Activated T-helper 2 cell treated with anti-CD3 and anti-CD28 coated beads, Interferon-gamma antibody, Interleukin-2, Interleukin-4, amounts not matched to agents 10 μg/mL and 5 μg/mL and 100 μg/mL, durations not matched to agents 14 hours and 24 hours and 36 hours (primary cell): ENCODE measurements at regions of chr3 and their contacts with region 1.

Region 1: GRCh38 chr3:111539351-111540331 is 2.4 kb upstream of the CD96 start:
- DNase-seq: peak; percentile 36
- H3K4me3 Mint-ChIP-seq: peak overlapping the region; percentile 69
- H3K27ac Mint-ChIP-seq: peak overlapping the region; percentile 85
- H3K4me1 Mint-ChIP-seq: peaks cover 66% of the 10 kb centered on the region
- H3K27me3 Mint-ChIP-seq: no peaks in the 10 kb centered on the region

Region 2: DNA sequence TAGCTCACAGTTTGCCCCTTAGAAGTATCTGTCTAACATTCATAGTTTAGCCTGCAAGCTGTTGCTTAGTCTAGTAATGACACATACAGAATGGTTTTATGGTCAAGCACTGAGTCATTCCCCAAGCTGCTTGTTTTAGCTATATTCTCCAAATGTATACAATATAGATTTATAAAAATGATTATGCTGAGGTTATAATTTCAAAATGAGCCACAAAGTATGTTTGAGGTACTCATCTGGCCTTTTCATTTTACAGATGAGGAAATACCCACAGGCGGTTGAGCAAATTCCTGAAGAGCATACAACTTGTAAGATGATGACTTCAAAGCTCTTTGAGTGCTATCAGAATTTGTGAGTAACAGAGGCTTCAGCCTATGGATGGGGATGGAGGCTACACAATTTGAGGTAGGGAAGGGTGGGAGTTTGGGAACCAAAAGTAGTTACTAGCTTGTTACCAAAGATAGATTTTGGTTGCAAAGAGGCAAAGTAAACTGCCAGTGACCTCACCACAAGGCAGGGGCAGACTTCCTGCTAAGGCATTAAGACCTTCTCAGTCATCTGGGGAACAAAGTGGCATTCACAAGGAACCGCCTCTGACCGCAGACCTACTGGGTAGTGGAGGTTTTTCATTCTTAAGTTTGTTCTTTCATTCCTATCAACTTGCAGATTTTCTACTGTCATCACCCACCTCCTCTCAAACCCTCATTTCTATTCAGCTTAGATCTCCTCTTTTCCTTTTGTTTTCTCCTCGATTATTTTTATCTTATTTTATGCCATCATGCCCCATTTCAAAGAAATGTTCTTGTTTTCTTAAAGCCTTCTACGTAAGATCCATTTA is 725.3 kb before region 1 on chr3:
- intact Hi-C with region 1: loop called (anchors 1 kb)
- DNase-seq: peak; percentile 35
- H3K4me3 Mint-ChIP-seq: peak overlapping the region; percentile 43
- H3K27ac Mint-ChIP-seq: peak overlapping the region; percentile 91
- H3K4me1 Mint-ChIP-seq: peaks cover 29% of the 10 kb centered on the region
- H3K27me3 Mint-ChIP-seq: peaks cover 26% of the 10 kb centered on the region

Region 3: DNA sequence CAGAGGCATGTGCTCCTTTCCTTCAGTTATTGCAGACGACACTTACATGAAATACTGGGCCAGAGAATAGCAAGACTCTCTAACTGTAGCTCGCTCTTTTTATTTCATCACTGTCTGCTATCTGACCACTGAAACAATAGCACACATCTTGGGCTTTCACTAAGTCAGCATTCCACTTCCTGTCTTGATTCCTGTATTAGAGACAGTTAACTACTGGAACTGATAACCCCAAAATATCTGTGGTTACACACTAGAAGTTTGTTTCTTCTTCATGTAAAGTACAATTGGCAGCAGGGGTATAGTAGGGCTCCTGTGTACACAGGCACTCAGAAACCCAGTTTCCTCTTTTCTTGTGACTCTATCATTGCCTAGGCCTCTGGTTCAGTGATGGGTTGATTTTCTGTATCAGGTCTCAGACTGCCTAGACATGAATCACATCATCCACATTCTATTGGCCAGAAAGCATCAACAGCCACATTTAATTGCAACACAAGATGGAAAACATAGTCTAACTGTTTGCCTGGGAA is 227.9 kb before region 1 on chr3:
- intact Hi-C with region 1: loop called (anchors 1 kb)
- DNase-seq: no peak
- H3K4me3 Mint-ChIP-seq: peak overlapping the region; percentile 18
- H3K27ac Mint-ChIP-seq: peak overlapping the region; percentile 77
- H3K4me1 Mint-ChIP-seq: peaks cover 39% of the 10 kb centered on the region
- H3K27me3 Mint-ChIP-seq: no peaks in the 10 kb centered on the region

Region 4: DNA sequence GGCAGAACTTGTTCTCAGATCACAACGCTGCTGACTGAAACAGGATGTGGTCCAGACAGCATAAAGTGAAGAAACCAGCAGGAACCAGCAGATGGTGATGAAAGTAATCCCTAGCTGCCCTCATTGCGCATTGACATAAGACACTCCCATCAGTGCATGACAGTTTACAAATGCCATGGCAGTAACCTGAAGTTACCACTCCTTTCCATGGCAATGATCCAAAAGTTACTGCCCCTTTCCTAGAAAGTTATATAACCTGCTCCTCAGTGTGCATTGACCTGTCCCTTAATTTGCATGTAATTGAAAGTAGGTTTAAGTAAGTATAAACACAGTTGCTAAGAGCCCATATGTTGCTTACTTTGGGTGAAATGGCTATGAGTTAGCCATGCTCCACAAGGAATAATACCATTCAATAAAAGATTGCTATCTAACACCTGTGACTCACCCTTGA is 146.7 kb before region 1 on chr3:
- intact Hi-C with region 1: no loop called
- DNase-seq: no peak
- H3K4me3 Mint-ChIP-seq: no peak overlapping the region
- H3K27ac Mint-ChIP-seq: no peak overlapping the region
- H3K4me1 Mint-ChIP-seq: peaks cover 10% of the 10 kb centered on the region
- H3K27me3 Mint-ChIP-seq: no peaks in the 10 kb centered on the region

Region 5: GRCh38 chr3:111506435-111506834 is 33.2 kb before region 1 on chr3:
- intact Hi-C with region 1: no loop called
- DNase-seq: no peak
- H3K4me3 Mint-ChIP-seq: no peak overlapping the region
- H3K27ac Mint-ChIP-seq: no peak overlapping the region
- H3K4me1 Mint-ChIP-seq: no peaks in the 10 kb centered on the region
- H3K27me3 Mint-ChIP-seq: no peaks in the 10 kb centered on the region

Region 6: GRCh38 chr3:111604119-111604518 is 64.5 kb after region 1 on chr3:
- intact Hi-C with region 1: loop called (anchors 2 kb)
- DNase-seq: no peak
- H3K4me3 Mint-ChIP-seq: peak overlapping the region; percentile 22
- H3K27ac Mint-ChIP-seq: peak overlapping the region; percentile 85
- H3K4me1 Mint-ChIP-seq: peaks cover 81% of the 10 kb centered on the region
- H3K27me3 Mint-ChIP-seq: no peaks in the 10 kb centered on the region

Region 7: GRCh38 chr3:112350181-112350825 is 810.7 kb after region 1 on chr3:
- intact Hi-C with region 1: no loop called
- DNase-seq: no peak
- H3K4me3 Mint-ChIP-seq: no peak overlapping the region
- H3K27ac Mint-ChIP-seq: peak overlapping the region; percentile 74
- H3K4me1 Mint-ChIP-seq: peaks cover 64% of the 10 kb centered on the region
- H3K27me3 Mint-ChIP-seq: no peaks in the 10 kb centered on the region